T-cell (primary cell): ENCODE measurements at regions of chr9 and their contacts with region 1.

Region 1: GRCh38 chr9:136482793-136483588 is at the start of gene SEC16A:
- DNase-seq: peak; percentile 96 to 100 (median 99)
- ATAC-seq: peak; percentile 68 to 78 (median 72)
- H3K4me3 ChIP-seq: peak within 1 kb of the TSS; percentile 64 to 77
- H3K4me3 Mint-ChIP-seq: peak within 1 kb of the TSS; percentile 94 to 97 (median 94)
- H3K27ac ChIP-seq: peak within 1 kb of the TSS; percentile 97
- H3K27ac Mint-ChIP-seq: peak within 1 kb of the TSS; percentile 97
- H3K4me1 ChIP-seq: peaks cover 7 to 44% of the 10 kb centered on the region in 2 experiments
- H3K4me1 Mint-ChIP-seq: peaks cover 37 to 40% (median 38%) of the 10 kb centered on the region in 3 donors
- H3K27me3 ChIP-seq: peaks cover 0 to 6% of the 10 kb centered on the region in 2 experiments
- H3K27me3 Mint-ChIP-seq: no peaks in the 10 kb centered on the region
- total RNA-seq, gene SEC16A: 76.3 to 99.0 (median 92.4) TPM

Region 2: GRCh38 chr9:136457326-136457725 is 25.7 kb before region 1 on chr9:
- CTCF ChIA-PET with region 1: no interaction called
- POLR2A ChIA-PET with region 1: interaction called in 1 of 2 experiments, 11 read pairs
- DNase-seq: no peak
- ATAC-seq: no peak
- H3K4me3 ChIP-seq: no peak overlapping the region
- H3K4me3 Mint-ChIP-seq: no peak overlapping the region
- H3K27ac ChIP-seq: no peak overlapping the region
- H3K27ac Mint-ChIP-seq: no peak overlapping the region
- H3K4me1 ChIP-seq: no peaks in the 10 kb centered on the region
- H3K4me1 Mint-ChIP-seq: peaks cover 0 to 5% (median 0%) of the 10 kb centered on the region in 3 donors
- H3K27me3 ChIP-seq: no peaks in the 10 kb centered on the region
- H3K27me3 Mint-ChIP-seq: no peaks in the 10 kb centered on the region

Region 3: DNA sequence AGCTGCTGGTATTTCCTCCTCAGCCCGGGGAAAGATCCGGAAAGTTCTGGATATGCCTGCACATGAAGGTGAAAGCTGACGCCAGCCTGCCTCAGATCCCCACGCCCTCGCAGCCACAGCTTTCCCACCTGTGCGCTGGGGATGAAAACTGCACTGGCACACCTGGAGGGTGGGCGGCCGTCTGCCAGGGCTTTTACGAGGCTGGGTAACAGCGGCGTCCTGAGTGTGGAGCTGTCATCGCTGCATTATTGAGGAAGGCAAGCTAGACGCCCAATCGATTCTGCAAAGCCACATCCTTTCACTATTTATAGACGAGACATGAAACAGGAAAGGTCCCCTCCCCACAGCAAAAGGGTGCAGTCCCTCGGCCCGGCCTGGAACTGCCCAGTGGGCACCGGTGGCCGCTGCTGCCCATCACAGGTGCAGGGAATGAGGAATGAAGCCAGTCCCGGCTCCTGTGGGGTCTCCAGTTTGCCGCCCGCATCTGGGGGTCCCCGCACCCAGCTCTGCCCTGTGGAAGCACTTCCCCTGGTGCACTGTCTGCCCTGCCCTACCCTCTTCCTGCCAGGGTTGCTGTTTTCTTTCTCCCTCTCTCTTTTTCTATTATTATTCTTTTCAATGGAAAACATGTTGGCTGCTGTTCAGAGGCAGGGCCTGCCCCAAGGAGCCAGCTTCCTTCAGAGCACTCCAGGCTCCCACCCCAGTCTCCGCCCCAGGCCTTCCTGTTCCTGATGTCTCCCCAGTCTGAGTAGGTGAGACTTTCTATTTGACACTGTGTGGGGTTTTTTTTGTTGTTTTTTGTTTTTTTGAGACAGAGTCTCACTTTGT is 55.8 kb after region 1 on chr9:
- CTCF ChIA-PET with region 1: interaction called in 1 of 2 experiments, 6 read pairs
- POLR2A ChIA-PET with region 1: interaction called in 1 of 2 experiments, 11 read pairs
- DNase-seq: peak in 31 of 35 experiments; percentile 27 to 79 (median 46)
- ATAC-seq: peak; percentile 54 to 75 (median 62)
- H3K4me3 ChIP-seq: peak overlapping the region; percentile 43 to 55
- H3K4me3 Mint-ChIP-seq: peak overlapping the region; percentile 82 to 87 (median 83)
- H3K27ac ChIP-seq: peak overlapping the region; percentile 82
- H3K27ac Mint-ChIP-seq: peak overlapping the region; percentile 98 to 100
- H3K4me1 ChIP-seq: peaks cover 39 to 94% of the 10 kb centered on the region in 2 experiments
- H3K4me1 Mint-ChIP-seq: peaks cover 57 to 78% (median 73%) of the 10 kb centered on the region in 3 donors
- H3K27me3 ChIP-seq: no peaks in the 10 kb centered on the region
- H3K27me3 Mint-ChIP-seq: no peaks in the 10 kb centered on the region